ENCODE measurements at regions of chr4 and their contacts with region 1.

Region 1: DNA sequence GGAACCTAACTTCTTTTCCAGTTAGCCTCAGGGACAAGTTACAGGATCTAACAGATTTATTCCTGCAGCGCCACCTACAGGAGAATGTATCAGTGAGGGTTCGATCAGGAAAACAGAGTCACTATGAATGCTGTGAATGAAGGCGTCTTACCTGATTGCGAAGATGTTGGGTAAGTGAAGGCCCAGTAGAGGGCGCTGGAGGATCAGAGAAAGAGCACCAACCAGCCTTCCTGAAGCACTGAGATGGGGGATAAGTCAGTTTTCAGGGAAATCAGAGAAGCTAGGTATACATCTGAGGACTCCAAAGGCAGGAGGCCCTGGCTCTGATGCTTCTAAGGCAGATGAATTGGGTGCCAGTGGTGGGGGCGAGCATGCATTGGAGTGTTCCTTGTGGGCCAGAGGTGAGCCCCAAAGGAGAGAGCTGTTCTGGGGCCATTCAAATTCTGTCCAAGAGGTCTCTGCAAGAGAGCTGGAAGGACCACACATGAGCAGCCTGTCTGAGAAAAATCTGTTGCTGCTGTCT is 169.9 kb upstream of the AADAT start:
- DNase-seq: peak; percentile 34
- H3K4me3 ChIP-seq: no peak overlapping the region
- H3K27ac ChIP-seq: no peak overlapping the region
- H3K4me1 ChIP-seq: no peaks in the 10 kb centered on the region
- H3K27me3 ChIP-seq: no peaks in the 10 kb centered on the region
- CTCF ChIP-seq: peak; percentile 58 to 65
- POLR2A ChIP-seq: no peak

Region 2: GRCh38 chr4:170138580-170139194 is 121.0 kb before region 1 on chr4:
- CTCF ChIA-PET with region 1: no interaction called
- POLR2A ChIA-PET with region 1: no interaction called
- dilution Hi-C with region 1: no loop called
- intact Hi-C with region 1: loop called (anchors 1 kb)
- DNase-seq: peak; percentile 68
- H3K4me3 ChIP-seq: no peak overlapping the region
- H3K27ac ChIP-seq: no peak overlapping the region
- H3K4me1 ChIP-seq: no peaks in the 10 kb centered on the region
- H3K27me3 ChIP-seq: no peaks in the 10 kb centered on the region
- CTCF ChIP-seq: peak; percentile 73 to 77
- POLR2A ChIP-seq: no peak

Region 3: DNA sequence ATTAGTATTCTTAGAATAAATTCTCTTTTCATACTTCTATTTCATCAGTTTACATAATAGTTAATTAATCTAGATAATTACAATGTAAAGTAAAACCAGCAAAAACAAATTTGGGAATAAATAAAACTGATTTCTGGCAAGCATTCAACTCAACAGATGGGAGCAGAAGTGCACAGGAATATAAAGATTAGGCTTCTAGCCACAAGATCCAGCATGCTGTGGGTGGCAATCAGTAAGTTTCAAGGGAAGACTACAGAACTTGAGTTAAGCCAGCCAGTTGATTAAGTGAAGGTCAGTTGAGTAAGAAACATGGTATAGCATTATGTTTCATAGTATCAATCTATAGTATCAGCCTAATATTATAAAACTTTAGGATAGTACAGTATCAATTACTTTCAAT is 154.3 kb after region 1 on chr4:
- CTCF ChIA-PET with region 1: no interaction called
- POLR2A ChIA-PET with region 1: no interaction called
- dilution Hi-C with region 1: no loop called
- intact Hi-C with region 1: no loop called
- DNase-seq: no peak
- H3K4me3 ChIP-seq: no peak overlapping the region
- H3K27ac ChIP-seq: no peak overlapping the region
- H3K4me1 ChIP-seq: no peaks in the 10 kb centered on the region
- H3K27me3 ChIP-seq: no peaks in the 10 kb centered on the region
- CTCF ChIP-seq: no peak
- POLR2A ChIP-seq: no peak

Region 4: GRCh38 chr4:170853422-170854021 is 593.8 kb after region 1 on chr4:
- CTCF ChIA-PET with region 1: no interaction called
- POLR2A ChIA-PET with region 1: no interaction called
- dilution Hi-C with region 1: no loop called
- intact Hi-C with region 1: loop called (anchors 2 kb)
- DNase-seq: no peak
- H3K4me3 ChIP-seq: no peak overlapping the region
- H3K27ac ChIP-seq: no peak overlapping the region
- H3K4me1 ChIP-seq: no peaks in the 10 kb centered on the region
- H3K27me3 ChIP-seq: no peaks in the 10 kb centered on the region
- CTCF ChIP-seq: peak in 1 of 2 donors; percentile 28
- POLR2A ChIP-seq: no peak